Activated T-helper 1 cell treated with anti-CD3 and anti-CD28 coated beads, Interleukin-12 subunit alpha, Interleukin-12 subunit beta, Interleukin-2, Interleukin-4 antibody, amounts not matched to agents 30 ng/mL and 10 ng/mL and 1 ng/mL, durations not matched to agents 14 hours and 24 hours and 36 hours (primary cell): ENCODE measurements at regions of chr5 and their contacts with region 1.

Region 1: GRCh38 chr5:176537608-176538504 is 654 bp upstream of the RNF44 start:
- DNase-seq: peak; percentile 97
- H3K4me3 Mint-ChIP-seq: peak overlapping the region; percentile 96
- H3K27ac Mint-ChIP-seq: peak overlapping the region; percentile 97
- H3K4me1 Mint-ChIP-seq: peaks cover 72% of the 10 kb centered on the region
- H3K27me3 Mint-ChIP-seq: no peaks in the 10 kb centered on the region

Region 2: DNA sequence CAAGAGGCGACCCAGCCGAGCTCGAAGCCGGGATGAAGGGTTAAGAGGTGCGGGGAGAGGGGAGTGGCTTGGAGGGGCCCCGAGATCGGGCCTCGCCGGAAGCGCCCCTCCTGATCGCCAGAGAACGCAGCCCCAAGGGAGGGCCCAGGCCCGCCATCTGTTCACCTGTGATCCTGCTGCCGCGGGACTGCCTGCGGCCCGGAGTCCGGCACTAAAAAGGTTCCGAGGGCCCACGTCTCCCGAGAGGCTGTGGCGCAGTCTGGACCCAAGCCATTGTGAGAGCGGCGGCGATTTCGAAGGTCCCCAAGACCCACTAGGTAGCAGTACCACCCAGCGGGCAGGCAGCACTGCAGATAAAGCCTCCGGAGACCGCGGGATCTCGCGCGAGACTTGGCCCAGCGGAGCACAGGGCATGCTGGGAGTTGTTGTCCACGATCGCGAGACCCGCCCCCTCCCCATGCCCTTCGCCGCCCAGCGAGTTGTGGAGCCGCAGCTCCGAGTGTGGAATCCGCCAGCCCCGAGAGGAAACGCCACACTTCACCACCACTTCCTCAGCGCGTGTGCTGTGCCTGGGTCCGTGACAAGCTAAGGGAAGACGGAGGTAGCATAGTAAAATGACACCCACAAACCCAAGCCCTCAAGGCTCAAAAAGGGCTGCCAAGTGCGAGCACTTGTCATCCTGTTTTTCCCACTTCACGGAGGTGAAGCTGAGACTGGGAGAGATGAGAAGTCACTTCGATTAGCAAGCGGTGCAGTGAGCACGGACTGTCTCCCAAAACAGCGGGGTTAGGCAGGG is 176.2 kb before region 1 on chr5 and contains the start of gene KIAA1191:
- intact Hi-C with region 1: loop called (anchors 1 kb)
- DNase-seq: peak; percentile 93
- H3K4me3 Mint-ChIP-seq: peak within 1 kb of the TSS; percentile 97
- H3K27ac Mint-ChIP-seq: peak within 1 kb of the TSS; percentile 91
- H3K4me1 Mint-ChIP-seq: peaks cover 36% of the 10 kb centered on the region
- H3K27me3 Mint-ChIP-seq: no peaks in the 10 kb centered on the region
- total RNA-seq, gene KIAA1191: 60.9 and 63.4 TPM in 2 replicates

Region 3: GRCh38 chr5:176447982-176448608 is 89.8 kb before region 1 on chr5 and contains the start of gene FAF2:
- intact Hi-C with region 1: loop called (anchors 1 kb)
- DNase-seq: peak; percentile 99
- H3K4me3 Mint-ChIP-seq: peak within 1 kb of the TSS; percentile 97
- H3K27ac Mint-ChIP-seq: peak within 1 kb of the TSS; percentile 96
- H3K4me1 Mint-ChIP-seq: peaks cover 40% of the 10 kb centered on the region
- H3K27me3 Mint-ChIP-seq: peaks cover 2% of the 10 kb centered on the region
- total RNA-seq, gene FAF2: 46.0 and 47.3 TPM in 2 replicates

Region 4: GRCh38 chr5:176901260-176902101 is 363.6 kb after region 1 on chr5:
- intact Hi-C with region 1: loop called (anchors 5 kb)
- DNase-seq: no peak
- H3K4me3 Mint-ChIP-seq: peak overlapping the region; percentile 16
- H3K27ac Mint-ChIP-seq: peak overlapping the region; percentile 82
- H3K4me1 Mint-ChIP-seq: peaks cover 28% of the 10 kb centered on the region
- H3K27me3 Mint-ChIP-seq: no peaks in the 10 kb centered on the region

Region 5: GRCh38 chr5:177311723-177312648 is 774.1 kb after region 1 on chr5 and contains the start of gene MXD3:
- intact Hi-C with region 1: loop called (anchors 5 kb)
- DNase-seq: peak; percentile 96
- H3K4me3 Mint-ChIP-seq: peak within 1 kb of the TSS; percentile 89
- H3K27ac Mint-ChIP-seq: peak within 1 kb of the TSS; percentile 85
- H3K4me1 Mint-ChIP-seq: peaks cover 44% of the 10 kb centered on the region
- H3K27me3 Mint-ChIP-seq: no peaks in the 10 kb centered on the region
- total RNA-seq, gene MXD3: 9.6 and 11.8 TPM in 2 replicates

Region 6: GRCh38 chr5:177497292-177498033 is 959.6 kb after region 1 on chr5 and contains the start of gene PDLIM7:
- intact Hi-C with region 1: loop called (anchors 1 kb)
- DNase-seq: peak; percentile 92
- H3K4me3 Mint-ChIP-seq: peak within 1 kb of the TSS; percentile 78
- H3K27ac Mint-ChIP-seq: peak within 1 kb of the TSS; percentile 83
- H3K4me1 Mint-ChIP-seq: peaks cover 43% of the 10 kb centered on the region
- H3K27me3 Mint-ChIP-seq: peaks cover 16% of the 10 kb centered on the region
- total RNA-seq, gene PDLIM7: 49.2 and 49.9 TPM in 2 replicates